Astrocyte of the cerebellum (primary cell): ENCODE measurements at regions of chr1 and their contacts with region 1.

Region 1: DNA sequence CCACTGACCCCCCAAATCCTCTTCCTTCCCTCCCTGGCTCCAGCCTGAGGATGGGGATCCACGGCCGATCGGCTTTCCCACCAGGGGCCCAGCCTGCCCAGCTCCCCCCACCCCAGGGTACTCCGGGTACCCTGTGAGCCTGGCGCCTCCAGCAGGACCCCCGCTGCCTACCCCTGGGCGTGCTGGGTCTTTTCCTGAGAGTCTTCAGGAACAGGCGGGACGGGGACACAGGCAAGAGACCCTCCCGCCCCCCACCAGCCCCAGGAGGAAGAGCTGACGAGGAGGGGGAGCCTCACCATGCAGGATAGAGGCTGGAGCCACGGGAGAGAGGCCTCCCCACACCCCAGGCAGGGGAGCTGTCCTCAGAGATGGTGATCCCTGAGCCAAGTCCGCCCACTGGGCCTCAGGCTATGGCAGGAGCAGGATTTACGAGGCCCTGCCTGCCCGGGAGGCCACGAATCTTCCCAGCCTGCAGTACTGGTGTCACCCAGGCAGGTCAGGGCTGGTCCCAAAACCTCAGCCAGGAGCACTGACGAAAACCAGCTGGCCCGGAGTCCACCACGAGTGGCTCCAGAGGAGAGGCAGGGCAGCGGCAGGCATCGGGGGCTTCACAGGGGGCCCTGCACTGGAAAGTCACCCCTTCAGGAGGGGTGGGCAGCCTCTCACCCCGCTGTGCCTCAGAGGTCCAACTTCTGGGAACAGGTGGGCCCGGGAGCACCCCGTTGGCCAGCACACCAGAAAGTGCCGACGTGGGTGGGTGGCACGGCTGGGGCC is 58.0 kb downstream of the MEGF6 start:
- DNase-seq: no peak
- H3K4me3 ChIP-seq: no peak overlapping the region
- CTCF ChIP-seq: no peak

Region 2: DNA sequence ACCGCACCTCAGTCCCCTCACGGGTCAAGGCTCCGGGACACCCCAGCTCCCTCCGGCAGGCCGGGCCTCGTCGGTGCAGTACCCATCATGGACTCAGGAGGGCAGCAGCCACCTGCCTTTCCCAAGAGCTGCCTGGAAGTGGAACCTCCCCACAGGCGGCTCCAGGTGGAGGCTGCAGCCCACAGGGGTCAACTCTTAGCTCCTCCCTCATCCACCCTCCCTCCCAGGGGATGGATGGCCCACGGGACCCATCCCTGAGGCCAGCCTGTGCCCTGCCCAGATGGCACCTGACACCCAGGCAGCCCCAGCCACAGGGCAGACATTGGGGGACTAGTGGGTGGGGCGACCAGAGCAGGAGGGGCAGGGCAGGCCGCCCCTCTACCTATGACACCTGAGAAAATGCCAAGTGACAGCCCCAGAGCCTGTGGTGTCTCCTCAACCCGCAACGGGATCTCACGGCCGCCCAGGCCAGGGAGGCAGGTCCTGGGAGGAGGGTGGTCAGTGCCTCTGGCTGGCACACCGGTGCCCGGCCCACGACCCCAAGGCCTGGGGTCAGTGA is 100.1 kb before region 1 on chr1:
- in situ Hi-C with region 1: loop called (anchors 5 kb)
- DNase-seq: no peak
- H3K4me3 ChIP-seq: no peak overlapping the region
- CTCF ChIP-seq: peak; percentile 94

Region 3: GRCh38 chr1:4090556-4090955 is 537.2 kb after region 1 on chr1:
- in situ Hi-C with region 1: no loop called
- DNase-seq: no peak
- H3K4me3 ChIP-seq: no peak overlapping the region
- CTCF ChIP-seq: no peak